ENCODE measurements at regions of chr9 and their contacts with region 1.

Region 1: GRCh38 chr9:21395778-21396717 is 10.8 kb upstream of the IFNA2 start:
- DNase-seq: peak; percentile 52 to 81
- ATAC-seq: peak; percentile 82
- H3K4me3 ChIP-seq: peak overlapping the region in 1 of 2 donors; percentile 37
- H3K27ac ChIP-seq: no peak overlapping the region
- H3K4me1 ChIP-seq: no peaks in the 10 kb centered on the region
- H3K27me3 ChIP-seq: peaks cover 0 to 6% of the 10 kb centered on the region in 2 donors

Region 2: GRCh38 chr9:21311889-21312288 is 84.2 kb before region 1 on chr9:
- intact Hi-C with region 1: no loop called
- DNase-seq: no peak
- ATAC-seq: no peak
- H3K4me3 ChIP-seq: no peak overlapping the region
- H3K27ac ChIP-seq: no peak overlapping the region
- H3K4me1 ChIP-seq: no peaks in the 10 kb centered on the region
- H3K27me3 ChIP-seq: no peaks in the 10 kb centered on the region

Region 3: GRCh38 chr9:21348430-21348970 is 47.5 kb before region 1 on chr9:
- intact Hi-C with region 1: loop called in 1 of 2 experiments (anchors 5 kb)
- DNase-seq: no peak
- ATAC-seq: no peak
- H3K4me3 ChIP-seq: no peak overlapping the region
- H3K27ac ChIP-seq: no peak overlapping the region
- H3K4me1 ChIP-seq: no peaks in the 10 kb centered on the region
- H3K27me3 ChIP-seq: no peaks in the 10 kb centered on the region